ENCODE measurements at regions of chr20 and their contacts with region 1.

Region 1: DNA sequence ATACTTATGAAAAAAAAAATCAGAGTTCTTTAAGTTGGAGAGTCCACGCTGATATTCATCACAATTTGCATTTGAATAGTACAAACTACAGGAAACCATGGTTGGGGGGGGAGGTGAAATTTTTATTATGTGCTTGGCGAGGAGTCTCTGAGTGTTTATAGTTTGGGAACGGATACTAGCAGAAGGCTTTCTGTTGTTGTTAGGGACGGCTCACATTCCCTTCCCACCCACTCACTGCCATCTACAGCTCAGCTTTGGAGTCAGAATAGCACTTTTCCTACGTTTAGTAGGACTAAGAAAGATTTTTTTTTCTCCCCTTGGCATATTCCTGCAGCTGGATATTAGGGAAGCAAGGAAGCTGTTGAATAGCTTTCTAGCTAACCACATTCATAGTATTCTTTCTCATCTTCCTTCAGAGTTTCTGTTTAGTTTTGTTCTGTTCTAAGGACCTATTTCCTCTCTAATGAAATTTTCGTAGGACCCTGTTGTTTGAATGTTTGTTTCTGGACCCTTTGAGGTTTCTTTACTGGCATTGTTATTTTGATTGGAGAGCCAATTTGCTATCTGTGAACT is 235.1 kb upstream of the ZNF217 start:
- DNase-seq: peak; percentile 69
- H3K4me3 ChIP-seq: peak overlapping the region in 3 of 4 donors; percentile 9 to 36 (median 18)
- H3K27ac ChIP-seq: peak overlapping the region; percentile 73 to 87 (median 83)
- H3K4me1 ChIP-seq: peaks cover 0 to 56% (median 42%) of the 10 kb centered on the region in 4 donors
- H3K27me3 ChIP-seq: no peaks in the 10 kb centered on the region
- CTCF ChIP-seq: no peak
- EP300 ChIP-seq: no peak
- POLR2A ChIP-seq: no peak

Region 2: GRCh38 chr20:53594068-53595017 is 234.4 kb before region 1 on chr20:
- intact Hi-C with region 1: loop called (anchors 5 kb)
- DNase-seq: peak; percentile 98
- H3K4me3 ChIP-seq: peak overlapping the region; percentile 82 to 97 (median 95)
- H3K27ac ChIP-seq: peak overlapping the region; percentile 98 to 99 (median 98)
- H3K4me1 ChIP-seq: peaks cover 0 to 20% (median 13%) of the 10 kb centered on the region in 4 donors
- H3K27me3 ChIP-seq: no peaks in the 10 kb centered on the region
- CTCF ChIP-seq: no peak
- EP300 ChIP-seq: no peak
- POLR2A ChIP-seq: no peak

Region 3: DNA sequence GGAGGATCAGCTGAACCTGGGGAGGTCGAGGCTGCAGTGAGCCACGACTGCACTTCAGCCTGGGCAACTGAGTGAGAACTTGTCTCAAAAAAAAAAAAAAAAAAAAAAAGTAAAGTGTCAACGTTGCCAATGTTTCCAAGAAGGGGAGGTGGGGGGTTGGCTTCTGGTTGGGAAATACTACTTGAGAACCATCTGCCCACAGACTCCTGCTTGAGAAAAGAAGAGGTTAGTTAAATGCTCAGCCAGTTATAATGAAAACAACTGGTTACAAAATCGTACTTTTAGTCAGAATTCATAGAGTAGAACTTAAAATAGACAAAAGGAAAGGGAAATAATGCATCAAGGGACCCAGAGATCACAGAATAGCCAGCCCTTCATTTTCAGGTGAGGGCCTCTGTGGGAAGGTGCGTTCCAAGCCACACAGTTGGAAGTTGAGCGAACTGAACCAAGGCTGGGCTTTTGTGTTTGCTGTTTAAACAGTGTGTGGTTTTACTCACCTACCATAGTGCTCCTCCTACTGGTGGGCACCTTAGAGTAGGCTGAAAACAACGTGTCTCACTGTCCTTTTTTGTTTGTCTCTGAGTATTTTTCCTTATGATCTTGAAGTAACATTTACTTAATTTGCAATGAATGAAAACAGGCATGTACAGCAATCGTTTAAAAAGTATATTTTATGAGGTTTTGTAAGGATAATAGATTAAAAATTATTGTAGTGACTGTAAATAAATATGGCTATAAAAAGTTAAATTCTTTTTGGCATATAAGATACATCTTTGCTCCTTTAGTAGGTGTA is 40.9 kb after region 1 on chr20:
- intact Hi-C with region 1: loop called (anchors 2 kb)
- DNase-seq: peak; percentile 71
- H3K4me3 ChIP-seq: no peak overlapping the region
- H3K27ac ChIP-seq: peak overlapping the region in 3 of 4 donors; percentile 16 to 57 (median 42)
- H3K4me1 ChIP-seq: peaks cover 0 to 42% (median 35%) of the 10 kb centered on the region in 4 donors
- H3K27me3 ChIP-seq: peaks cover 0 to 3% (median 0%) of the 10 kb centered on the region in 3 donors
- CTCF ChIP-seq: peak; percentile 56 to 85 (median 72)
- EP300 ChIP-seq: no peak
- POLR2A ChIP-seq: no peak

Region 4: DNA sequence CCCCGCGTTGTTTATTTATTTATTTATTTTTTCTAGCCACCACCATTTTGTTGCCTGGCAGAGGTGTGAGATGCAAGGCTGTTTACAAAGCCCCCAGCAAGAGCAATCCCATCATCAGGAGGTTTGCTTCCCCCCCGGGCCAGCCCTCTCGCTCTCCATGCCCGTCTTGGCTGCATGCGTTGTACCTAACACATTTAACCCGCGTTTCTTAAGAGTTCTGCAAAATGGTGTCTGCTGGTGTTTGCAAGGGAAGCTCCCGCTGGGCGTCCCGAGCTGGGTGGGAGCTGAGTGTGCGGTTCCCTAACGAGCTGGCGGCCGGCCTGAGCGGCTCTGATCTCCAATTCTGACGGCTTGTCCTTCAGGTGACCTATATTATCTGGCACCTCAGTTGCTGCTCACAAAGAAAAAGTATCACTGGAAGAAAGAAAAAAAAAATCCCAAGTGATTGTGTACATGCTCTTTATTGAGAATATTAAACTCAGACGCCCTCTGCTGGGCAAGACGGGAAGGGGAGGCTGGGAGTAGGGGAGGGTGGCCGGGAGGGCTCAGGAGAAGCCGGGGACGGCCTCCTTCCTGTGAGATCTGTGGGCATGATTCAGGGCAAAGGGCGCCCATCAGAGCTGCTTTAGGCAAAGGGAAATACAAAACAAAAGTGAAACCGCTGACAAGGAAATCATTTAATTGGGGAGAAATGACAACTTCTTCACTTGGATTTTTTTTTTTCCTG is 86.8 kb after region 1 on chr20:
- intact Hi-C with region 1: loop called (anchors 5 kb)
- DNase-seq: peak; percentile 96
- H3K4me3 ChIP-seq: peak overlapping the region; percentile 36 to 58 (median 56)
- H3K27ac ChIP-seq: peak overlapping the region; percentile 79 to 87 (median 80)
- H3K4me1 ChIP-seq: peaks cover 0 to 38% (median 33%) of the 10 kb centered on the region in 4 donors
- H3K27me3 ChIP-seq: no peaks in the 10 kb centered on the region
- CTCF ChIP-seq: peak; percentile 88 to 94 (median 90)
- EP300 ChIP-seq: no peak
- POLR2A ChIP-seq: no peak

Measured in sigmoid colon (tissue), 7 donors.